ENCODE measurements at regions of chr19 and their contacts with region 1.

Region 1: DNA sequence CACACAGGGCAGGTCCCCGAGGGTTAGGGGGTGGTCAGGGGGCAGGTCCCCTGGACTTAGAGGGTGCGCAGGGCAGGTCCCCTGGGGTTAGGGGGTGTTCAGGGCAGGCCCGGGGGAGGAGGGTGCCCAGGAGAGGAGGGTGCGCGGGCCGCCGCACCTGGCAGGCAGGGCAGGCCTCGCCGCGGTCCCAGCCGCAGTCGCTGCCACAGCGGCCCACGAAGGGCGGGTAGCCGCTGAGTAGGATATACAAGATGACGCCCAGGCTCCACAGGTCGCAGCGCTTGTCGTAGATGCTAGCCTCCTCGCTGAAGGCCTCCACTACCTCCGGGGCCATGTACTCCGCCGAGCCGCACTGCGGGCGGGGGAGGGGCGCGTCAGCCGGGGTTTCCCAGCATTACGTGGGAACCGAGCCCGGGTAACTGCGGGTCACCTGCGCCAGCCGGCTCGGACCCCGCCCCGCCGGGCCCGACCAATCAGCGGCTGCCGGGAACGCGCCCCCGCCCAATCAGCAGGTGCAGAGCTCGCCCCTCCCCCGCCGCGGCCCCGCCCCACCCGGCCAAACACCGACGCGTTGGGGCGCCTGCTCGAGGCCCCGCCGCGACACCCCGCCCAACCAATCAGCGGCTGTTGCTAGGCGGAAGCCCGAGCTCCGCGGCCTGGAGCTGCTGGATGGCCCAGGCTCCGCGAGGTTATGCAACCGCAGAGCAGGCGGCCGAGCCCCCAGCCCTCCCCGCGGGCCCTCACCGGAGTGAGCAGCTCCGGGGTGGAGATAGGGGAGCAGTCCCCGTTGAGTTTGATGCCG is 9.2 kb downstream of the MKNK2 start:
- DNase-seq: peak; percentile 99
- H3K4me3 ChIP-seq: peak overlapping the region; percentile 29
- H3K27ac ChIP-seq: peak overlapping the region; percentile 93 to 95
- H3K4me1 ChIP-seq: peaks cover 14% of the 10 kb centered on the region
- H3K27me3 ChIP-seq: no peaks in the 10 kb centered on the region
- CTCF ChIP-seq: no peak
- EP300 ChIP-seq: peak; percentile 89
- POLR2A ChIP-seq: peak; percentile 29

Region 2: DNA sequence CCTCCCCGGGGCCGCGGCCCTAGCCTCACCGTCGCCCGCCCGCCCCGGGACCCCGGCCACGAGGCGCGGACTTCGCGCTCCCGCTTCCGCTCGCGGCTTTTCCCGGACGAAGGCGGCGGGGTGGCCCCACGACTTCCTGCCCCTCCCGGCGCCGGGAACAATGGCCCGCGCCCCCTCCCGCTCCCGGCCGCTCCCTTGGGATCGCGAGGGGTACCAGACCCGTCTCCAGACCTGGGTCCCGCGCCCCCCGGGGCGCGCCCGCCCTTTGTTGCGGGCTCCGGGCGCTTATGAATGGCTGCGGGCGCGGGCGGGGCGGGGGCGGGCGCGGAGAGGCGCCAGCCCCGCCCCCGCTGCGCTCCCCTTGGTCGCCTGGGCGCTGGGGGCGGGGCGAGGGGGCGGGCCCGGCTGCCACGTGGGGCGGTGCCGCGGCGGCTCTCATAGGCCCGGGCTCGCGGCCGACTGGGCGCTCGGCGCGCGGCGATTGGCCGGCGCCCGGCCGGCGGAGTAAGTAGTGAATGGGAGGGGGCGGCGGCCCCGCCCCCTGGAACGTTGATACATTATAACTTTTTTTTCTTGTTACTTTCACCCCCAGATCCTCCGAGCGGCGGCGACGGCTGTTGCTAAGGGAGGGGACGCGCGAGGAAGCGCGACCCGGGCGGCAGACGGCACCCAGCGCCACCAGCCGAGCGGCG is 792.4 kb before region 1 on chr19:
- intact Hi-C with region 1: loop called in 1 of 4 experiments (anchors 10 kb)
- DNase-seq: peak; percentile 91 to 96 (median 94)
- H3K4me3 ChIP-seq: peak overlapping the region; percentile 77
- H3K27ac ChIP-seq: peak overlapping the region; percentile 99
- H3K4me1 ChIP-seq: peaks cover 33% of the 10 kb centered on the region
- H3K27me3 ChIP-seq: no peaks in the 10 kb centered on the region
- CTCF ChIP-seq: no peak
- EP300 ChIP-seq: peak; percentile 72
- POLR2A ChIP-seq: peak; percentile 93

Region 3: DNA sequence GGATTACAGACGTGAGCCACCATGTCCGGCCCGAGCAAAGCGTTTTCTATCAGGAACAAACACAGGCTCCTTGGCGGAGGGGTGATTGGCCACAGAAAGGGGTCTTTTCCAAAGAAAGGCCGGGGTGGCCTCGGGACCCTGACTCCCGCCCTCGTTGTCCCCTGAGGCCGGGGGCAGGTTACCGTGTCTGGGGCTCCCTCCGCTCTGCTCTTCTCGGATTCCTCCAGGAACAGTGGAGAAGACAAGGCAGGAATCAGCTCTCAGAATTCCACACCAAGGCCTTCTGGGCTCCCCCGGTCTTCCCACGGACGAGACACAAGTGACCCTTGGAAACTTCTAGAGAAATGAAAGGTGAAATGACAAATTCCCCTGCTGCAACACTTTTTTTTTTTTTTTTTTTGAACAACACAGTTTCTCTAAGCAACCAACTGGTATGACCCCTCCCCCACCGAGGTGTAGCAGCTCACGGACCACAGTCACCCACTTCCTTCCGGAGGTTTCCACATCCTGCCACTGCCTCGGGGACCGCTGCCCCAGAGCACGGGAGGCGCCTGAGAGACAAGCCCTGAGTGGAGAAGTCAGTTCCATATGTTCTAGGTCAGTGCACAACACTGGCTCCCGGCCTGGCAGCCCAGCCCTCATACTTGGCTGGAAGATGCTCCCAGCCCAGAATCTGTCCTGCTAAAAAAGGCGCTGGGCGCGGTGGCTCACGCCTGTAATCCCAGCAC is 43.3 kb after region 1 on chr19:
- intact Hi-C with region 1: no loop called
- DNase-seq: no peak
- H3K4me3 ChIP-seq: no peak overlapping the region
- H3K27ac ChIP-seq: no peak overlapping the region
- H3K4me1 ChIP-seq: no peaks in the 10 kb centered on the region
- H3K27me3 ChIP-seq: no peaks in the 10 kb centered on the region
- CTCF ChIP-seq: no peak
- EP300 ChIP-seq: no peak
- POLR2A ChIP-seq: no peak

Measured in ovary (tissue), 10 donors.